Activated T-helper 1 cell treated with anti-CD3 and anti-CD28 coated beads, Interleukin-12 subunit alpha, Interleukin-12 subunit beta, Interleukin-2, Interleukin-4 antibody, amounts not matched to agents 30 ng/mL and 10 ng/mL and 1 ng/mL, durations not matched to agents 14 hours and 24 hours and 36 hours (primary cell): ENCODE measurements at regions of chr12 and their contacts with region 1.

Region 1: DNA sequence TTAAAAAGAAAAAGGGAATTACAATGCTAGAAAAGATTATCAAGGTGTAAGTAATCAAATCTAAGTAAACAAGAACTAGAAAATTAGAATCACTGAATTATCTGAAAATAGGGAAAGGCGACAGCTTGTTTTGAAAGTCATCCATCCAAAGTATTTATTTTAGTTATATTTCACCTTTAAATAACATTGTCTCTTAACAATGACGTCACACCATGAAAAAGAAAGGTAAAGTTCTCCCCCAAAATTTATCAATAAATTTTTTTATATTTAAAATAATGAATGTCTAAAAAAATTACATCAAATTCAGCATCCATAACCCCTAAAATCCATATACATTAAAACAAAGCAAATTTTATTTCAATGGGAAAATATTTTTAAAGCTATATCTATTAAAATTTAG is 223.2 kb downstream of the RERGL start:
- DNase-seq: no peak
- H3K4me3 Mint-ChIP-seq: no peak overlapping the region
- H3K27ac Mint-ChIP-seq: no peak overlapping the region
- H3K4me1 Mint-ChIP-seq: no peaks in the 10 kb centered on the region
- H3K27me3 Mint-ChIP-seq: no peaks in the 10 kb centered on the region

Region 2: DNA sequence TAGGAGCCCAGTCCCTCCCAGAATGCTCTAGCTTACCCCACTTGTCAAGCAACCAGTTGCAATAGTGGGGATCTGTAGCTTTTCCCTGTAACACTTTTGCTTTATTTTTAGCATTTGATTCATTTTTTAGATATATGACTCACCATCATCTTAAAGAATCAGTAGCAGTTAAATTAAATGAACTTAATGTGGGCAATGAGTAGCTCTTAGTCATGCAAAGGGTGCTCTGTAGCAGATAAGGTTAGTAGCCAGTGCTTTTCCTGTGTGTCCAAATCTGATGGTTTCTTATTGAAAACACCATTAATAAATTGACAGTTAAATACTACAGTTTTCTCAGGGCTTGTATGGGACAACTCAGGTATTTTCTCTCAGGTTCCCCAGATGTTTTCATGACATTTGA is 88.6 kb before region 1 on chr12:
- intact Hi-C with region 1: loop called (anchors 2 kb)
- DNase-seq: no peak
- H3K4me3 Mint-ChIP-seq: no peak overlapping the region
- H3K27ac Mint-ChIP-seq: no peak overlapping the region
- H3K4me1 Mint-ChIP-seq: no peaks in the 10 kb centered on the region
- H3K27me3 Mint-ChIP-seq: no peaks in the 10 kb centered on the region

Region 3: DNA sequence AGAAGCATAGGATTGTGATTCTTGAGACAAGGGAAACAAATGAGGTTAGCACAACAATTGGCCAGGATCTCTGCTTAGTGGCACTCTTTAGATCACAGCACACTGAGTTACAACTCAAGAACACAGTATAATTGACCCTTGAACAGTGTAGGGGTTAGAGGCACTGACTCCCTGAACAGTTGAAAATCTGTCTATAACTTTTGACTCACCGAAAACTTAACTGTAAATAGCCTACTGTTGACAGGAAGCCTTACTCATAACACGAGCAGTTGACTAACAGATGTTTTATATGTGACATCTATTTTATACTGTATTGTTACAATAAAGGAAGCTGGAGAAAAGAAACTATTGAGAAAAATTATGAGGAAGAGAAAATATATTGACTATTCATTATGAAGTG is 72.9 kb before region 1 on chr12:
- intact Hi-C with region 1: no loop called
- DNase-seq: no peak
- H3K4me3 Mint-ChIP-seq: no peak overlapping the region
- H3K27ac Mint-ChIP-seq: no peak overlapping the region
- H3K4me1 Mint-ChIP-seq: no peaks in the 10 kb centered on the region
- H3K27me3 Mint-ChIP-seq: no peaks in the 10 kb centered on the region